Activated naive CD8-positive, alpha-beta T cell treated with anti-CD3 and anti-CD28 coated beads, Interleukin-2, amount 10 ng/mL, durations not matched to agents 7 days and 5 days (primary cell): ENCODE measurements at regions of chr15 and their contacts with region 1.

Region 1: DNA sequence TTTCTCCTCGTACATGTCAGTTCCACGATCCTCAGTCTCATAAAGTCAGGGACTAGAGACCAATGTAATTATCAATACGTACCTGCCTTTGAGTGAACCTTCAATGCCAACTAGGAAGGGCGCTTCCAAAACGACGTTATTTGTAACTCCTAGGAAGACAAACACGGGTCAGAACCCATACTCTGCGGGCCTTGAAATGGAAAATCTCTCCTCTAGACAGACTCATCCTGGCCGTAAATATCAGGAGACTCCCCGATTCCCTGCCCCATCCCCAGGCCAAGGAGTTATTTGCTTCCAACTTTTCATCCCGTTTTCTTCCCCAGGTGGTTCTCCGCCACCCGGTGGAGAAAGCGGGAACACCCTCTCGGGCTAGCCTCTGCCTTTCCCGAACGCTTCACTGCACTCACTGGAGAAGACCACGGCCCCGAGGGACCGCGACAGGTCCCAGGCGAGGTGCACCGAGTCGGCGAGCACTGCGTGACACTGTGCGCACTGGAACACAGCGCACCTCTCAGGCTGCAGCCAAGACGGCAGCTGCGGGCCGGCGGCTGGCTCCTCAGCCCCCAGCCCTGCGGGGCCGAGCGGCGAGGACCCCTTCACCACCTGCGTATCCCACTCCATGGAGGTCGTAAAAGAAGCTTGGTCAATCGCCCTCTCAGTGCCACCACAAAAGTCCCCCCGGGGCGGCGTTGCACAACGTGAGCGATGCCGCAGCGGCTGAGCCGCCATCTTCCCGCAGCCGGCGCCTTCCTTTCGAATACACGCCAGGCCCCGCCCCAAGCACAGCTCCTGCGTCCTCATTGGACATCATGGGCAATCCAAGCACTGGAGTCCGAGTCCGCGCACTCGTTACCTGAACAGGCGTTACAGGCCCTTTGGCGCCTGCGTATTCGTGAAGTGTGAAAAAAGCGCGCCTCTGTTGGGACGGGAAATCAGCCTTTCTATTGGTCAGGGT is at the start of gene OIP5:
- DNase-seq: peak; percentile 93
- ATAC-seq: peak; percentile 98
- H3K4me3 Mint-ChIP-seq: peak within 1 kb of the TSS; percentile 98
- H3K27ac Mint-ChIP-seq: peak within 1 kb of the TSS; percentile 99
- H3K4me1 Mint-ChIP-seq: peaks cover 23% of the 10 kb centered on the region
- H3K27me3 Mint-ChIP-seq: no peaks in the 10 kb centered on the region
- total RNA-seq, gene OIP5: 17.1 to 17.2 TPM

Region 2: DNA sequence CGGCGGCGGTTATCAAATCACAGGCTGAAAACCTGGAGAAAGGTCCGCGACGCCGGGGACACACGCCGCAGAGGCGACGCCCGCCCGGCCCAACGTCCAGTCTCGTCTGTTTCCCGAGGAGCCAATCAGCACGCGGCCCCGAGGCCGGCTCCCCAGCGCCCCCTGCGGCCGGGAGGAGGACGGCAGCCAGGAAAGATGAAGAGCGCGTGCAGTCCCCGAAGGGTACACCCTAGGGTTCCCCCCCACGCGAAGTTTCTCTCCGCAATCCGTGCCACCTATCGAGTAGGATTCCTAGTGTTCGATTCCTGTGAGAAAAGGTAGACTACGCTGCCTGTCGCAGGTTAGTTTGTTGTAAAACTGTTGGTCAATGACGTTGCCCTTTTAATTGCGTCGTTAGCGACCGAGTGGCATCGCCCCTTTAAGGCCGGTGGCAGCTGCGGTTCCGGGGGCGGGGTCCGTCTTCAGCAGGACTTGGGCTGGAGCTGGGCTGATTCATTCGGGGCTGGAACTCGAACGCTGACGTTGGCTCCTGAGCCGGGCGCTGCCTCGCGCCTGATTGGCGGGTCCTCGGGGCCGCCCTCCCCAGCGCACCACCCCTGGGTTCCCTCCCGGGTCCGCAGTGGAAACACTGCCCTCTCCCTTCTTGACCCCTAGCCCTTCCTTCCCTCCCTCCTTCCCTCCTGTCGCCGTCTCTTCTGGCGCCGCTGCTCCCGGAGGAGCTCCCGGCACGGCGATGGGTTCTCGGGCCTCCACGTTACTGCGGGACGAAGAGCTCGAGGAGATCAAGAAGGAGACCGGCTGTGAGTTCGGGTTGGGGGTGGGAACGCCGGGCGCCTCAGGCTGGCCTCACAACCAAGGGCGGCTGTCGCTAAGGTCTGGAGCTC is 101.2 kb before region 1 on chr15 and contains the starts of genes CHP1 and EXD1:
- POLR2A ChIA-PET with region 1: interaction called, 13 read pairs
- DNase-seq: peak; percentile 95
- ATAC-seq: peak; percentile 99
- H3K4me3 Mint-ChIP-seq: peak within 1 kb of the TSS; percentile 91
- H3K27ac Mint-ChIP-seq: peak within 1 kb of the TSS; percentile 93
- H3K4me1 Mint-ChIP-seq: peaks cover 22% of the 10 kb centered on the region
- H3K27me3 Mint-ChIP-seq: peaks cover 9% of the 10 kb centered on the region
- total RNA-seq, gene CHP1: 40.6 to 41.3 TPM
- total RNA-seq, gene EXD1: not detected

Region 3: GRCh38 chr15:41283653-41284426 is 48.3 kb before region 1 on chr15:
- POLR2A ChIA-PET with region 1: interaction called, 26 read pairs
- DNase-seq: peak; percentile 98
- ATAC-seq: peak; percentile 96
- H3K4me3 Mint-ChIP-seq: peak overlapping the region; percentile 96
- H3K27ac Mint-ChIP-seq: peak overlapping the region; percentile 94
- H3K4me1 Mint-ChIP-seq: peaks cover 40% of the 10 kb centered on the region
- H3K27me3 Mint-ChIP-seq: no peaks in the 10 kb centered on the region